Heart left ventricle (tissue), 16 donors: ENCODE measurements at regions of chr18 and their contacts with region 1.

Region 1: DNA sequence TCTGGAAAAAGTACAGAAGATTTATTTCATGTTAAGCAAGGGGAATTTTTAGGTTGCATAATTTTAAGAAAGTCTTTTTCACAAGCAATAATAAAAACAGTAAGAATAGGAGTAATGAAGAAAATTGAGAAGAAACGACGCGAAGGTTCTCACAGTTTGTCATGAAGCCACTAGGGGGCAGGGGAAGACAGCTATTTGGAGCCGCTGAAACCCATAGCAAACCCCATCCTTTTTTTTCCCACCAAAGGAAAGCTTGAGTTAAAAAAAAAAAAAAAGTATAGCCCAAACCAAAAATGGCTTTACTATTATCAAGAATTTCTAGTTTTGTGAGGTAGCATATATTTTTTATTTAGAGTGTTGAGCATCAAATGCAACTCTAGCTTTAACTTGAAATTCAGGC is 300.9 kb downstream of the PHLPP1 start:
- DNase-seq: peak in 2 of 5 donors; percentile 38 to 42
- ATAC-seq: peak in 3 of 4 donors; percentile 58 to 72 (median 65)
- H3K4me3 ChIP-seq: no peak overlapping the region
- H3K27ac ChIP-seq: no peak overlapping the region
- H3K4me1 ChIP-seq: no peaks in the 10 kb centered on the region
- H3K27me3 ChIP-seq: peaks cover 0 to 9% (median 0%) of the 10 kb centered on the region in 9 donors
- CTCF ChIP-seq: peak; percentile 65 to 89 (median 82)
- POLR2A ChIP-seq: no peak

Region 2: DNA sequence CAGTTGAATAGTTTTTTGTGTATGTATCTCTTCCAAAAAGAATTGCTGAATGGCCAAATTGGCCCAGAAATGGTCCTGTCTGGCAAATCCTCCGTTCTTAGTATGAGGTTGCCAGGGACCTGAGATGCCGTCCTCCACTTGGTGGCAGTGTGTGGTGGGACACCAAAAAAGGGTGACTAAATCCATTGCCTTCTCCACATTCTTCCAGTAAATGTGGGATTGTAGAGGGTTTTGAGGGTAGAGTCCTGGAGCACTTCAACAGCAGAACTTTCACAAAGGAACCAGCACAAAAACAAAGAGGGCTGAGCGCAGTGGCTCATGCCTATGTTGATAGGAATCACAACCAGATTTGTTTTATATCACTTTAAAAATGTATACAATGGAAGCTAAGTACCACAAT is 103.4 kb after region 1 on chr18:
- intact Hi-C with region 1: loop called in 6 of 10 experiments (anchors 5 to 10 kb)
- DNase-seq: peak in 2 of 5 donors; percentile 33 to 37
- ATAC-seq: peak in 3 of 4 donors; percentile 55 to 68 (median 64)
- H3K4me3 ChIP-seq: no peak overlapping the region
- H3K27ac ChIP-seq: no peak overlapping the region
- H3K4me1 ChIP-seq: peaks cover 0 to 14% (median 4%) of the 10 kb centered on the region in 12 donors
- H3K27me3 ChIP-seq: no peaks in the 10 kb centered on the region
- CTCF ChIP-seq: peak; percentile 11 to 67 (median 49)
- POLR2A ChIP-seq: no peak

Region 3: GRCh38 chr18:63329431-63330145 is 313.3 kb after region 1 on chr18:
- intact Hi-C with region 1: loop called in 3 of 10 experiments (anchors 1 to 5 kb)
- DNase-seq: no peak
- ATAC-seq: no peak
- H3K4me3 ChIP-seq: no peak overlapping the region
- H3K27ac ChIP-seq: no peak overlapping the region
- H3K4me1 ChIP-seq: no peaks in the 10 kb centered on the region
- H3K27me3 ChIP-seq: no peaks in the 10 kb centered on the region
- CTCF ChIP-seq: no peak
- POLR2A ChIP-seq: no peak

Region 4: GRCh38 chr18:63439334-63439733 is 423.1 kb after region 1 on chr18:
- intact Hi-C with region 1: loop called (anchors 2 to 5 kb)
- DNase-seq: peak in 1 of 5 donors; percentile 32
- ATAC-seq: peak; percentile 33 to 76 (median 63)
- H3K4me3 ChIP-seq: no peak overlapping the region
- H3K27ac ChIP-seq: no peak overlapping the region
- H3K4me1 ChIP-seq: peaks cover 0 to 9% (median 0%) of the 10 kb centered on the region in 12 donors
- H3K27me3 ChIP-seq: no peaks in the 10 kb centered on the region
- CTCF ChIP-seq: peak; percentile 57 to 85 (median 78)
- POLR2A ChIP-seq: no peak